CD8-positive, alpha-beta T cell (primary cell): ENCODE measurements at regions of chr1 and their contacts with region 1.

Region 1: DNA sequence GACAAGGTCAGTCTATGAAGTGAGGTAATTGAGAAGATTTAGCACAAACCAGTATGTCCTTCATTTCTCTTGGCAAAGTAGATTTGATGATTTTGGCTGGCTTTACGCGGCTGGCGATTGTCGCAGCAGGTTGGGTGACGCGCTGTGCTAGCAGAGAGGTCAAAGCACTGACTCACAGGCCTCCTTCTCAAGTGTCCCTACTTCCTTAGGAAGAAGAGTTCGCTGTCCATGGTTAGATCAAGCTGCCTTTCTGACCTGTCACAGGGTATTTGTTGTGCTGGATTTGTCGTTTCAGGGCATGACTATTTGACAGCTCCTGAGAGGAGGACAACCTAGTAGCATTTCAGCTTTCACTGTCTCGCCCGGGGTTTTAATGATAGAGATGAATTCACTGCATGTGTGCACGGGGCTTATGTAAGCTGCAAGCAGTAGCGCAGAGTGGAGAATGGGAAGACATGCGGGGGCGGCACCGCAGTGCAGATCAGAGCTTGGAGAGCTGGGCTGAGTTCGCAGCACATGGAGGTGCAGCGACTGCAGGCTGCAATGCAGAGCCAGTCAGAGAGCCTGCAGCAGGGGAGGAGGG is 32.8 kb downstream of the XCL1 start:
- DNase-seq: no peak
- ATAC-seq: no peak
- H3K4me3 ChIP-seq: no peak overlapping the region
- H3K4me3 Mint-ChIP-seq: no peak overlapping the region
- H3K27ac ChIP-seq: no peak overlapping the region
- H3K27ac Mint-ChIP-seq: no peak overlapping the region
- H3K4me1 ChIP-seq: no peaks in the 10 kb centered on the region
- H3K4me1 Mint-ChIP-seq: no peaks in the 10 kb centered on the region
- H3K27me3 ChIP-seq: no peaks in the 10 kb centered on the region
- H3K27me3 Mint-ChIP-seq: peaks cover 4% of the 10 kb centered on the region
- CTCF ChIP-seq: no peak

Region 2: DNA sequence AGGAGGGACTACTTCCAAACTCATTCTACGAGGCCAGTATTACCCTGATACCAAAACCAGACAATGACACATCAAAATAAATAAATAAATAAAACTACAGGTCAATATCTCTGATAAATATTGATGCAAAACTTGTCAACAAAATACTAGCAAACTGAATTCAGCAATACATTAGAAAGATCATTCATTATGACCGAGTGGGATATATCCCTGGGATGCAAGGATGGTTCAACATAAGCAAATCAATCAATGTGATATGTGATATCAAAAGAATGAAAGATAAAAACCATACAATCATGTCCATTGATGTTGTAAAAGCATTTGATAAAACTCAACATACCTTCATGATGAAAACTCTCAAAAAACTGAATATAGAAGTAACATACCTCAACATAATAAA is 721.7 kb after region 1 on chr1:
- CTCF ChIA-PET with region 1: no interaction called
- POLR2A ChIA-PET with region 1: no interaction called
- intact Hi-C with region 1: loop called in 1 of 2 experiments (anchors 5 kb)
- DNase-seq: no peak
- ATAC-seq: no peak
- H3K4me3 ChIP-seq: no peak overlapping the region
- H3K4me3 Mint-ChIP-seq: no peak overlapping the region
- H3K27ac ChIP-seq: no peak overlapping the region
- H3K27ac Mint-ChIP-seq: no peak overlapping the region
- H3K4me1 ChIP-seq: no peaks in the 10 kb centered on the region
- H3K4me1 Mint-ChIP-seq: peaks cover 16% of the 10 kb centered on the region
- H3K27me3 ChIP-seq: no peaks in the 10 kb centered on the region
- H3K27me3 Mint-ChIP-seq: no peaks in the 10 kb centered on the region
- CTCF ChIP-seq: no peak